ENCODE measurements at regions of chr9 and their contacts with region 1.

Region 1: GRCh38 chr9:5799314-5799713 is 33.6 kb downstream of the ERMP1 start:
- DNase-seq: peak in 3 of 10 donors; percentile 24 to 59 (median 26)

Region 2: GRCh38 chr9:5832543-5833529 is 33.5 kb after region 1 on chr9 and contains the start of gene ERMP1:
- intact Hi-C with region 1: loop called (anchors 5 kb)
- DNase-seq: peak; percentile 85 to 99 (median 92)

Region 3: DNA sequence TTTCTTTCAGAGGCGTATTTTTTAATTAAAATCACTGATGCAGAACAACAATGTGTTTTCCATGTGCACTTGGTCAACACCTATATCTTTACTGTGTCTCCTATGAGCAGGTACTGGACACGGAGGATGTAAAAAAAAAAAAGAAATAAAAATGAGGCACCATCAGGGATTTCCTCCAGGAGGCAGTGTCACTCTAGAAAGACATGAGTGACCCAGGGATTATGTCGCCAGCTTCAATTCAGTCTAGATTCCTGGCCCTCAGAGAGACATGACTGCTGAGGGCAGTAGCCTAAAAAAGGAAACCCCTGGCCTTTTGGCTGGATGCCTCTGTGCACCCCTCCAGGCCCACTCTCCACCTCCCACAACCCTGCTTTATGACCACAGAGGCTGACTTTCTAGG is 398.0 kb after region 1 on chr9:
- intact Hi-C with region 1: loop called (anchors 10 kb)
- DNase-seq: no peak